Activated T-helper 2 cell treated with anti-CD3 and anti-CD28 coated beads, Interferon-gamma antibody, Interleukin-2, Interleukin-4, amounts not matched to agents 10 μg/mL and 5 μg/mL and 100 μg/mL, durations not matched to agents 14 hours and 24 hours and 36 hours (primary cell): ENCODE measurements at regions of chr6 and their contacts with region 1.

Region 1: DNA sequence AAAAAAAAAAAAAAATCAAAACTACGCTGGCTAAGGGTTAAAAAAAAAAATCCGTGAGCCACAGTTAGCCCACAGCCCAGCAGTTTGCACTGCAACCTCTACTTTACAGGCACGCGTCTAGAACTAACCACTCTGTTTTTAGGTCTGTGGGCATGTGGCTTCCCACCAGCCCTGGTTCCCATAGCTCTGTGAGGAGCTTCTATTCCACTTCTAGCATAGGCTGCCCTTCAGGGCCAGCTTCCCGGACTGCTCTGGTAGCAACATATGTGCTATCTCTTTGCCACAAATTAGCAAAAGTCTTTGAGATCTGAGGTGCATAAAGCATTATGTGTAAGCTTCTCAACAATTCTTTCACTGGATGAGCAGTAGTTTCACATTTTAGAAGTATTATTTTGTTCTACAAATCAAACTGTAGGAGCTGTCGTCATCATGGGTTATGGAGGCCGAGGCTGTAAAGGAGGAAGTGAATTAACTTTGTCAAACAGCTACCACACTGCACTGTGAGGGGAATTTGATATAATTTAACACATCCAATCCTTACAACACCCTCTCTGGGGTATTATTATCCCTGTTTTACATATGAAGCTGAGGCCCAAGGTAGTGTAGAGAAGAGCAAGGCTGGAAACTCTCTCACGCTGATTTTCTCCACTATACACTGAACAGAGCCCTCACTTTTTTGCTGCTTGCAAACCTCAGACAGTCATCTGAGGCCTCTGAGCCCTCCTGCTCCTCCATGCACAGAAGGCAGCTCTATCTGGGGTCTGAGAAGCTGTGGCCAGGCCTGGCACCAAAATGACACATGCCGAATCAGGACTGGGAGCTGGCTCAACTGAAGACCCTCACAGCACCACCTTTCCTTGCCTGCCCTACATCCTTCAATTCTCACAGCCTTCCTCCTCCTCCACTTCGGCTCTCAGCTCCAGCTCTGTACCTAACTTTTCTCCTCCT is 35.4 kb downstream of the MAN1A1 start:
- DNase-seq: peak; percentile 39
- H3K4me3 Mint-ChIP-seq: peak overlapping the region; percentile 66
- H3K27ac Mint-ChIP-seq: peak overlapping the region; percentile 99
- H3K4me1 Mint-ChIP-seq: peaks cover 80% of the 10 kb centered on the region
- H3K27me3 Mint-ChIP-seq: no peaks in the 10 kb centered on the region

Region 2: GRCh38 chr6:119078376-119079282 is 235.6 kb before region 1 on chr6 and contains the start of gene FAM184A:
- intact Hi-C with region 1: loop called (anchors 2 kb)
- DNase-seq: peak; percentile 67
- H3K4me3 Mint-ChIP-seq: peak within 1 kb of the TSS; percentile 89
- H3K27ac Mint-ChIP-seq: peak within 1 kb of the TSS; percentile 69
- H3K4me1 Mint-ChIP-seq: peaks cover 28% of the 10 kb centered on the region
- H3K27me3 Mint-ChIP-seq: peaks cover 8% of the 10 kb centered on the region
- total RNA-seq, gene FAM184A: 2.6 and 2.9 TPM in 2 replicates

Region 3: DNA sequence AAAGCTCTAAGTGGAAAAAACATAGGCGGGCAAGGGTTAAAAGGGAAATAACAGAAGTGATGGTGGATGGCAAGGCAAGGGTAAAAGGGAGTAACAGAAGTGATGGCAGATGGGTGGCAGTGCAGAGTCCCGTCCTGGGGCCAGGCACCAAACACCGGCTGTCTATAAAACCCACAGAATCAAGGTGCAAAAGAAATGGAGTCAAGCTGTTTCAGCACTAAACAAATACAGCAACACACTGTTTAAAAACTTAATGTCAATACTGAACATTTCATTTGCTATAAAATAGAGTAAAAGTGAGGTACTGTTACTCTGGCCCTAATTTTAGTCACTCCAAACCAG is 52.3 kb before region 1 on chr6:
- intact Hi-C with region 1: loop called (anchors 1 kb)
- DNase-seq: no peak
- H3K4me3 Mint-ChIP-seq: no peak overlapping the region
- H3K27ac Mint-ChIP-seq: peak overlapping the region; percentile 68
- H3K4me1 Mint-ChIP-seq: peaks cover 35% of the 10 kb centered on the region
- H3K27me3 Mint-ChIP-seq: no peaks in the 10 kb centered on the region

Region 4: DNA sequence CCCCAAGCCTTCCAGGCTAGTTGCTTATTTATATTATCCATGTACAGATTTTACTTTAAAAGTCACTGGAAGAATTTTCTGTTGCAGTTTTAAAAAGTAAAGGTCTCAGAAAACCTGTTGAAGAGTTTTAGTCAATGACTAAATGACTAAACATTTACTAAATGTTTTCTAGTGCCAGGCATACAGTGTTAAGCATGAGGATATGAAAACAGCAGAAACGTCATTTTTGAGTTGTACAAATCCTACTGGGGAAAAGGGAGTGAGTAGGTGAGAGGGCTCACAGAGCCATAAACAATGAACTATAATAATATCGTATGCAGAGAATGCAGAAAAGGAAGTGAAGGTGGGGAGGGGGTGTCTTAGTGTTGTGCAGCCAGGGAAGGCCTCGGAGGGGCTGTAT is 31.0 kb before region 1 on chr6:
- intact Hi-C with region 1: loop called (anchors 1 kb)
- DNase-seq: no peak
- H3K4me3 Mint-ChIP-seq: no peak overlapping the region
- H3K27ac Mint-ChIP-seq: peak overlapping the region; percentile 13
- H3K4me1 Mint-ChIP-seq: peaks cover 24% of the 10 kb centered on the region
- H3K27me3 Mint-ChIP-seq: no peaks in the 10 kb centered on the region

Region 5: GRCh38 chr6:119294984-119295383 is 19.2 kb before region 1 on chr6:
- intact Hi-C with region 1: loop called (anchors 1 kb)
- DNase-seq: no peak
- H3K4me3 Mint-ChIP-seq: no peak overlapping the region
- H3K27ac Mint-ChIP-seq: peak overlapping the region; percentile 65
- H3K4me1 Mint-ChIP-seq: peaks cover 33% of the 10 kb centered on the region
- H3K27me3 Mint-ChIP-seq: no peaks in the 10 kb centered on the region

Region 6: DNA sequence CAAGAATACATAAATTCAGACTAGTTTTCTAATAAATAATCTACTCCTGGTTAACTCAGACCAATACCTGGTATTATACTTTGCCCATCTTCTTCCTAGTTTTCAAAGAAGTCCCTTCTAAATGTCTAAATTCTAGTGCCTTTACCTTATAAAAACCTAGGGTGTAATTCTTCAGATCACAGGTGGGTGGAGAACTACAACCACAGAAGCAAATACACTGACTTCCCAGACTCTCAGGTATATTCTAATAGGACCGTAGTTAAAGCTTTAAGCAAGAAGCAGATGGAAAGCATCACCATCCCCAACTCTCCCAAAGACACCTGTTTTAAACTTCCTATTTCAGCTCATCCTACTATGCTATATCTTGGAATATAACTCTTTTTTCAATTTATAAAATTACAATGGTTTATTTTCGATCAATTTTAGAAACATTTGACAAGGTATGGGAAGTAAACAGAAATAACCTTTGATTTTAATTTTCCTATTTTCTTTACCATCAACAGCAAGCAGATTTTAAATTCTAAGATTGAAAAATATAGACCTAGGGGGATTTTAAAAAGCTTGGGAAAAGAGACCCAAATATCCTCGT is 19.6 kb after region 1 on chr6:
- intact Hi-C with region 1: loop called (anchors 2 kb)
- DNase-seq: no peak
- H3K4me3 Mint-ChIP-seq: no peak overlapping the region
- H3K27ac Mint-ChIP-seq: no peak overlapping the region
- H3K4me1 Mint-ChIP-seq: peaks cover 61% of the 10 kb centered on the region
- H3K27me3 Mint-ChIP-seq: no peaks in the 10 kb centered on the region

Region 7: DNA sequence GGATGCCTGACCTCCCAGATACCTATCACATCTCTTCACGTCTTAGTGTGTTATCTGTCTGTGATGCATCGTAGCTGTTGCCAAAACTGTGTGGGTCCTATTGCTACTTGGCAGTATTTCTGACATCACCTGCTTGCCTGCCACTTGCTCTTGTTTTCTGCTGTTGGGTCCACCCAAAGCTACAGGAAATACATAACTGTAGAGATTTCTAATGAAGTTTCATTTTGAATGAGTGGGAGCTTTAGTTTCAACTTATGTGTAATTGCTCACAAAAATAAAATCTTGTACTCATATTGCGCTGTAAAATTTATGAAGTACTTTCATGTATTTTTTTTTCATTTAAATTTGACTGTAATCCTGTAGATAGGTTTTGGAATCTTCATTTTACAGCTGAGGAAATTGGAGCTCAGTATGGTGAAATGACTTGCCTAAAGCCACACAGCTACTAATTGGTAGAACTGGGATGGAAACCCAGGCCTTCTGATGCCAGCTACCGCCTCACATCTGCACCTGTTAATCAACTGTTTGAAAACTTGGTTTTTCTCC is 148.9 kb after region 1 on chr6:
- intact Hi-C with region 1: loop called (anchors 5 kb)
- DNase-seq: peak; percentile 37
- H3K4me3 Mint-ChIP-seq: peak overlapping the region; percentile 11
- H3K27ac Mint-ChIP-seq: peak overlapping the region; percentile 84
- H3K4me1 Mint-ChIP-seq: peaks cover 65% of the 10 kb centered on the region
- H3K27me3 Mint-ChIP-seq: no peaks in the 10 kb centered on the region